IMR-90 (cell line): ENCODE measurements at regions of chr18 and their contacts with region 1.

Region 1: GRCh38 chr18:11995445-11996189 is 14.3 kb downstream of the IMPA2 start:
- DNase-seq: peak; percentile 77
- ATAC-seq: peak; percentile 88
- H3K4me3 ChIP-seq: no peak overlapping the region
- H3K27ac ChIP-seq: no peak overlapping the region
- H3K4me1 ChIP-seq: peaks cover 11% of the 10 kb centered on the region
- H3K27me3 ChIP-seq: no peaks in the 10 kb centered on the region
- CTCF ChIP-seq: peak; percentile 90
- POLR2A ChIP-seq: 0 out of 2 replicates have a peak, but pooled peaks have one; percentile 22
- RAD21 ChIP-seq: peak; percentile 95

Region 2: DNA sequence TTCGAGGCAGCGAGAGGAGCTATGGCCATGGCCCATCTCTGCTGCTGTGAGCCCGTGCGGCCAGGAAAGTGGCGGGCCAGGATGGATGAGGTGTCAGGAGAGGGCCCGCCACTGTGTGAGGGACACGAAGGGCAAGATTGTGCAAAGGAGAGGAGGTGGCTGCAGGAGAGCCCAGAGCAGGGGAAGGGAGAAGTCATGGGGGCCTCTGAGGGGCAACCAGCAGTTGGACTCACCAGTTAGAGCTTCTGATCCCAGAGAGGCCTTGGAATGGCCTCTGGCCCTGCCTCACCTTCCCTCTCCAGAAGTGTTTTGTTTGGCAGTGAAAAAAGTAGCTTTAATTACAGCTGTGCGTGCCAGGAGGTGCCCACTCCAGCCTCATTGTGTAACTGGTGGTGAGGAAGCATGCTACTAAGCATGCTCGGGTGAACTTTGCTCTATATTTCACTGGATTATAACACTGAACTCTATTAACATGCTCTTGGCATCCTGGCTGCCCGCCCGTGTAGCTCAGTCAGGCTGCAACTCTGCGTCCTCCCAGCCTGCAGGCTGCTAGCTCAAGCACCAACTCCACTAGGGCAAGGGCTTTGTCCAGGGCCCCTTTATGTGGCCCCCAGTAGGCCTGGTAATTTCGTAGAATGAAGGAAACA is 19.9 kb after region 1 on chr18:
- CTCF ChIA-PET with region 1: interaction called, 11 read pairs
- POLR2A ChIA-PET with region 1: no interaction called
- dilution Hi-C with region 1: no loop called
- in situ Hi-C with region 1: no loop called
- intact Hi-C with region 1: no loop called
- DNase-seq: peak; percentile 72
- ATAC-seq: peak; percentile 88
- H3K4me3 ChIP-seq: no peak overlapping the region
- H3K27ac ChIP-seq: peak overlapping the region; percentile 1; the same call in 1 of the 2 replicates
- H3K4me1 ChIP-seq: peaks cover 21% of the 10 kb centered on the region
- H3K27me3 ChIP-seq: no peaks in the 10 kb centered on the region; the same call in 1 of the 2 replicates
- CTCF ChIP-seq: no peak
- POLR2A ChIP-seq: no peak
- RAD21 ChIP-seq: no peak